ENCODE measurements at regions of chr7 and their contacts with region 1.

Region 1: DNA sequence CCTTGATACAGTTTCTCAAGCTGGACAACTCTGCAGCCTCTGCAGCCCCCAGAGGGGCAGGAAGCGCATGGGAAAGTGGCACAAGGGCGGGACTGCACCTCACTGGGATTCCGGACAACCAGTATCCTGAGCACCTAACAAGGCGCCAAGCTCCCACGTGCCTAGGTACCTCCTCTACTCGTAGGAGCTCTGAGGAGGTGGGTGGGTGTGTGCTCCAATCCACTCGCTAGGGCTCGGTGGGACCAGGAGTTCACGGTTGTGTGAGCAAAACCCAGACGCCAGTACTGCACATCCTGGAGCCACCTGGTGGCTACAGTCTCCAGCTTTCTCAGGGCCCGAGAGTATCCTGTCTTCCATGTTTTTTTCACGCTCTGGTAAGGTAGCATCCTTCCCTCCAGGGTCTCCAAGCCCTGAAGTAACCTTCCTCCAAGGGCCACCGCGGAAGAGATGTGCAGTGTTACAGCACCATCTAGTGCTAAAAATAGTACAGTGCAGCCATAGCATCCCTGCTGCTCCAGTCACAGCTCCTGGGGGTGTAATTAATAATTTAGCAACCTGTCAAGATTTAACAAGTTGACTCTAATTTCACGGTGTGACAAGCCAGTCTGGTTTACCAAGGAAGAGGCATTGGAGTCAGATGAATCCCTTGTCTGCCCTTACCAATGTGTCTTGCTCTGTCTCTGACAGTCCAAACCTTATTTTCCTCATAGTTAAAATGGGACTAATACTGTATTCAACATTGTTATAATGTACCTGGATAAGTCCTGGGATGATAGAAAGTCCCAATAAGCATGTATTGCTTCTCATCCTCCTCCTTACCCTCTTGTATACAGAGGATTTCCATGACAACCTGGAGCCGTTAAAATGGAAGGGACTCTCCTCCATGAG is 70.4 kb downstream of the HERPUD2 start:
- DNase-seq: peak; percentile 46 to 62 (median 62)
- H3K4me3 ChIP-seq: no peak overlapping the region
- H3K27ac ChIP-seq: no peak overlapping the region
- H3K4me1 ChIP-seq: no peaks in the 10 kb centered on the region
- H3K27me3 ChIP-seq: no peaks in the 10 kb centered on the region

Region 2: GRCh38 chr7:35424869-35425495 is 199.6 kb before region 1 on chr7:
- CTCF ChIA-PET with region 1: interaction called, 28 read pairs
- POLR2A ChIA-PET with region 1: no interaction called
- DNase-seq: peak; percentile 58 to 80 (median 75)
- H3K4me3 ChIP-seq: no peak overlapping the region
- H3K27ac ChIP-seq: no peak overlapping the region
- H3K4me1 ChIP-seq: no peaks in the 10 kb centered on the region
- H3K27me3 ChIP-seq: peaks cover 0 to 5% (median 0%) of the 10 kb centered on the region in 5 experiments

Region 3: DNA sequence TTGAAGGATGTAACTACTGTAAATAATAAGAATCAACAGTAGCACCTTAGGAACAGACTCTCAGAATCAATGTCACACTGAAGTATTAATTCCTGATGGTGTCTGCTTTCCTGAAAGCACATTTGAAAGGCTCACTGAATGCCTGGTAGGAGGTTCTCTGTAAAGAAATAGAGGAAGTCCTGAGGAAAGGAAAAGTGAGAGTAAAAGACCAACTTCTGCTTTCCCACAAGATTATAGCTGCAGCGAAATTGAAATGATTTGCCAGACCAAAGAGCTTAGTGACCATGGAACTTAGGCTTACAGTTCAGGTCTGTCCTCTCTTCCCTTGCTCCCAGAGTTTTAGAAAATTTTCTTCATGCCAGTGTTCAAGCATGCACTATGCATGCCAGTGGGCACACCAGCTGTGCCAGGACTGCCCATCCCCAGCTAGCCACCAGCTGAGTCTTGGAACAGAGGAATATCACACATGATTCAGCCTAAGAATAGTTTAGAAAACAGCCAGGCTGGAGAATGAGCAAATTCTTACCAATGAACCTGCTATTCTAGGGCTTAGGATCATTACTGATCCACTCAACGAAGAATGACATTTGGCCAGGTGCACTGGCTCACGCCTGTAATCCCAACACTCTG is 52.8 kb before region 1 on chr7:
- CTCF ChIA-PET with region 1: no interaction called
- POLR2A ChIA-PET with region 1: no interaction called
- DNase-seq: peak; percentile 17 to 70 (median 70)
- H3K4me3 ChIP-seq: no peak overlapping the region
- H3K27ac ChIP-seq: no peak overlapping the region
- H3K4me1 ChIP-seq: peaks cover 3 to 9% (median 6%) of the 10 kb centered on the region in 4 experiments
- H3K27me3 ChIP-seq: peaks cover 0 to 7% (median 0%) of the 10 kb centered on the region in 5 experiments

Region 4: DNA sequence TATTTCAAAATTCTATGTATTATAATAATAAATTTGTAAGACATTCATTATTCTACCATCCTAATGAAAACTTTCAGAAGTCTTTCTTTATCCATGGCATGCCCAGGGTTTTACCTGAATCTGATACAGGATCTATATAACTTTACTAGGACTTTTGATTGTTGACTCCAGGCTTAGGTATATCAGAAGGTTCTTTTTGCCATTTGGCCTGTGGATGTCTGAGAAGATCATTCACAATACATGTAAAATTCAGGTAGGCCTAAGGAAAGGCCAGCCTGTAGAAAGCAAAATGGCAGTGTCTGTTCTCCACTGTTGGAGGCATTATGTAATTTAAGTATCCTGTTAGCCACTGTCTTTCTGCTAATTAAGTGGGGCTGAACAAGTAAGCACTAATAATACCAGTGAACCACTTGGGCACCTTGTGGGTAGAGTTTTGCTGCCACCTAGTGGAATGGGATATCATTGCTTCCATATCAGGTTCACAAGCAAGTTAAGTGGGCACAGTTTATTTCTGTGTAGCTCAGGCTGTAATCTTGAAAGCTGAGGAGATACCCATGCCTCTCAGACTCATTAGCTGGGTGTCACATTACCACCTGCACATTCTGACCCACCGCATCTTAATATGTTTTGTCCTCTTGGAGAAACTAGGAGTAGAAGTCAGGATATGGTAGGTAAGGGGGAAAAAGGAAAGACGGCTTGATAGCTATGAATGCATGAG is 281.8 kb after region 1 on chr7:
- CTCF ChIA-PET with region 1: interaction called, 19 read pairs
- POLR2A ChIA-PET with region 1: no interaction called
- DNase-seq: peak; percentile 81 to 92 (median 88)
- H3K4me3 ChIP-seq: no peak overlapping the region
- H3K27ac ChIP-seq: no peak overlapping the region
- H3K4me1 ChIP-seq: no peaks in the 10 kb centered on the region
- H3K27me3 ChIP-seq: no peaks in the 10 kb centered on the region

Region 5: DNA sequence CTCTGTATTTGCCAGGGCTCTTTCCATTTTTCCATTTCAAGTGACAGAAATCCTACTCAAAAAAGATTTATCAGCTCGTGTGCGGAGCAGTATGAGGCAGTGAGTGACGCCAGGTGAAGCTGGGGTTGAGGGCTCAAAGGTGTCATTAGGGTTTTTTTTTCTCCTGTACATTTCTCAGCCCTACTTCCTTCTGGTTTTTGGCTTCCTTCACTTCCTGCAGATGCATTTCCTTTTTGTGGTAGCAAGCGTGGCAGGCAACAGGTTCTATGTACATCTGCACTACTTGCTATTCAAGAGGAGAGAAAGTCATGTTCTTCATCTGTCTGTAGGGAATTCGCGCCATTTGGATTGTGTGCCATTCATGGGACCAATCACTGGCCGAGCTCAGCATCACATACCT is 1152.5 kb after region 1 on chr7:
- CTCF ChIA-PET with region 1: no interaction called
- POLR2A ChIA-PET with region 1: no interaction called
- DNase-seq: peak; percentile 56 to 81 (median 70)
- H3K4me3 ChIP-seq: peak overlapping the region in 1 of 7 experiments; percentile 40
- H3K27ac ChIP-seq: no peak overlapping the region
- H3K4me1 ChIP-seq: peaks cover 15 to 34% (median 27%) of the 10 kb centered on the region in 4 experiments
- H3K27me3 ChIP-seq: no peaks in the 10 kb centered on the region

Measured in common myeloid progenitor, CD34-positive (primary cell).